ENCODE measurements at regions of chr18 and their contacts with region 1.

Region 1: GRCh38 chr18:44507729-44508325 is 172.9 kb upstream of the SETBP1 start:
- DNase-seq: peak; percentile 85
- ATAC-seq: peak; percentile 87
- H3K4me3 ChIP-seq: peak overlapping the region in 1 of 5 experiments; percentile 18
- H3K4me3 Mint-ChIP-seq: no peak overlapping the region
- H3K27ac ChIP-seq: peak overlapping the region; percentile 81 to 86
- H3K27ac Mint-ChIP-seq: no peak overlapping the region
- H3K4me1 ChIP-seq: peaks cover 44% of the 10 kb centered on the region in 2 donors
- H3K4me1 Mint-ChIP-seq: peaks cover 21% of the 10 kb centered on the region
- H3K27me3 ChIP-seq: no peaks in the 10 kb centered on the region
- H3K27me3 Mint-ChIP-seq: no peaks in the 10 kb centered on the region
- CTCF ChIP-seq: no peak

Region 2: DNA sequence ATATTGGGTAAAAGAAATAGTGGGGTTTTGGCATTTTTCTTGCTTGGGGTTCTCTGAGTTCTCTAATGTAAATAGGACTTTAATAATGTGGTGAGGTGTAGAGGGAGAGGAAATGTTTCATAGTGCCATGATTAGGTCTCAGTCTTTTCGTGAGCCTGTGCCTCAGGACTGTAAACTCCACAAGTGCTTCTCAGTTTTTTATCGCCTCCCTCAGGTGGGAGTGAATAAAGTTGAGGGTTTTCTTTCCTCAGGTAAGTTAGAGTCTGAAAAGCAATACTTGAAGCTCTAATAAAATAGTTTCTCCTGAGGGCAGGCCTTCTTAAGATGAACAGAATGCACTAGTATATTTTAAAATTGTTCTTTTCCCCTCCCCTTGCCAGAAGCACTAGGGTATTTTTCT is 70.2 kb before region 1 on chr18:
- CTCF ChIA-PET with region 1: no interaction called
- POLR2A ChIA-PET with region 1: no interaction called
- intact Hi-C with region 1: no loop called
- DNase-seq: no peak
- ATAC-seq: no peak
- H3K4me3 ChIP-seq: no peak overlapping the region
- H3K4me3 Mint-ChIP-seq: no peak overlapping the region
- H3K27ac ChIP-seq: no peak overlapping the region
- H3K27ac Mint-ChIP-seq: no peak overlapping the region
- H3K4me1 ChIP-seq: no peaks in the 10 kb centered on the region
- H3K4me1 Mint-ChIP-seq: no peaks in the 10 kb centered on the region
- H3K27me3 ChIP-seq: no peaks in the 10 kb centered on the region
- H3K27me3 Mint-ChIP-seq: peaks cover 12% of the 10 kb centered on the region
- CTCF ChIP-seq: no peak

Region 3: DNA sequence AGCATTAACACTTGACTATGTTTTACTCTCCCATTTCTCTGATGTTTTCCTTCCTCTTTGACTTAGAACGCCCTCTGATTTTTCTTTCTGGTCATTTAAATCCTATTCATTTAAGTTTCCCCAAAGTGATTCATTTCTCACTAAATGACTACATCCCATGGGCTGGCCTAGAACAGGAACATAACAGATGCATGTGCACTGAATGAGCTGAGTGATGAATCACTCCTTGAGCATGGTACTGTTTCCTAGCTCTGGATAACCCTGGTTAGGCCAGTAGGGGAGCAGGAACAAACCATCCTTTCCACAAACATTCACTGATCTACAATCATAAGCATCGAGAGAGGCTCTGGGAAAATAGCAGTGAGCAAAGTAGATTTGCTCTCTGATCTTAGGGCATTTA is 49.0 kb before region 1 on chr18:
- CTCF ChIA-PET with region 1: no interaction called
- POLR2A ChIA-PET with region 1: no interaction called
- intact Hi-C with region 1: no loop called
- DNase-seq: no peak
- ATAC-seq: no peak
- H3K4me3 ChIP-seq: no peak overlapping the region
- H3K4me3 Mint-ChIP-seq: no peak overlapping the region
- H3K27ac ChIP-seq: no peak overlapping the region
- H3K27ac Mint-ChIP-seq: no peak overlapping the region
- H3K4me1 ChIP-seq: no peaks in the 10 kb centered on the region
- H3K4me1 Mint-ChIP-seq: no peaks in the 10 kb centered on the region
- H3K27me3 ChIP-seq: no peaks in the 10 kb centered on the region
- H3K27me3 Mint-ChIP-seq: no peaks in the 10 kb centered on the region
- CTCF ChIP-seq: no peak

Region 4: DNA sequence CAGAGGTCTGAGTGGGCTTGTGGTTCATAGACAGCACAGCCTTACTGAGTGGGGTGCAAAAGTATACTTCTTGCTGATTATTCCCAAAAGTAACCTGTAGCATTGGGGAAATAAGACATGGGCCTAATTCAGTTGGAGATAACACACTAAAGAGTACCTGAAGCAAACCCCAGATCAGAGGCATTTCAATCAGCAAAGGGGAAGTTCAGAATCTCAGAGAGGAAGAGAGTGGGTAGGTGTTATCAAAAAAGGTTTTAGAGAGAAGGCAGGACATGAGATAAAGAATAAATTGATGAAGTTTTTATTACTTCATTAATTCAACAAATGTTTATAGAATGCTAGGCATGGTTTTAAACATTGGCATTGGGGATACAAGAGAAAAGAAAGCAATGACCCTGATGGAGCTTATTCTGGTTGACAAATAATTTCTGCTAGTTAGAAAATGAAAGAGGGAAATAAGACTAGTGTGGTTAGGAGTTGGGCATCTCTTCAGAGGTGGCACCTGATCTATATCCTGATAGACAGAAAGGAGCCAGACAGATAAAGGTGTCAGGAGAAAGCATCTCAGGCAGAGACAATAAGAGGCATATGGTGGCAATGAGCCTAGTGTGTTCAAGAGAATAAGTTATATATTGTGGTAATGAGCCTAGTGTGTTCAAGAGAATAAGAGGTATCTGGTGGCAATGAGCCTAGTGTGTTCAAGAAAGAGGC is 19.0 kb after region 1 on chr18:
- CTCF ChIA-PET with region 1: interaction called, 3 read pairs
- POLR2A ChIA-PET with region 1: no interaction called
- intact Hi-C with region 1: loop called (anchors 2 kb)
- DNase-seq: peak; percentile 53
- ATAC-seq: peak; percentile 67
- H3K4me3 ChIP-seq: no peak overlapping the region
- H3K4me3 Mint-ChIP-seq: peak overlapping the region; percentile 0
- H3K27ac ChIP-seq: peak overlapping the region; percentile 49 to 67
- H3K27ac Mint-ChIP-seq: peak overlapping the region; percentile 81
- H3K4me1 ChIP-seq: peaks cover 27 to 30% of the 10 kb centered on the region in 2 donors
- H3K4me1 Mint-ChIP-seq: peaks cover 24% of the 10 kb centered on the region
- H3K27me3 ChIP-seq: no peaks in the 10 kb centered on the region
- H3K27me3 Mint-ChIP-seq: no peaks in the 10 kb centered on the region
- CTCF ChIP-seq: no peak

Region 5: GRCh38 chr18:44725300-44726096 is 217.7 kb after region 1 on chr18:
- CTCF ChIA-PET with region 1: no interaction called
- POLR2A ChIA-PET with region 1: no interaction called
- intact Hi-C with region 1: loop called (anchors 1 kb)
- DNase-seq: peak; percentile 68
- ATAC-seq: peak; percentile 50
- H3K4me3 ChIP-seq: peak overlapping the region in 3 of 5 experiments; percentile 3 to 23 (median 7)
- H3K4me3 Mint-ChIP-seq: peak overlapping the region; percentile 70
- H3K27ac ChIP-seq: peak overlapping the region; percentile 80 to 85
- H3K27ac Mint-ChIP-seq: peak overlapping the region; percentile 88
- H3K4me1 ChIP-seq: peaks cover 99 to 100% of the 10 kb centered on the region in 2 donors
- H3K4me1 Mint-ChIP-seq: peaks cover 98% of the 10 kb centered on the region
- H3K27me3 ChIP-seq: no peaks in the 10 kb centered on the region
- H3K27me3 Mint-ChIP-seq: no peaks in the 10 kb centered on the region
- CTCF ChIP-seq: no peak

Measured in B cell (primary cell).